ENCODE measurements at regions of chr17 and their contacts with region 1.

Region 1: GRCh38 chr17:62906881-62907280 is 59.2 kb upstream of the TANC2 start:
- DNase-seq: no peak
- H3K4me3 ChIP-seq: no peak overlapping the region
- H3K27ac ChIP-seq: no peak overlapping the region
- H3K4me1 ChIP-seq: no peaks in the 10 kb centered on the region
- H3K27me3 ChIP-seq: no peaks in the 10 kb centered on the region
- CTCF ChIP-seq: no peak
- EP300 ChIP-seq: no peak
- POLR2A ChIP-seq: no peak

Region 2: GRCh38 chr17:62923258-62924150 is 16.6 kb after region 1 on chr17:
- in situ Hi-C with region 1: no loop called
- intact Hi-C with region 1: loop called (anchors 1 kb)
- DNase-seq: no peak
- H3K4me3 ChIP-seq: no peak overlapping the region
- H3K27ac ChIP-seq: no peak overlapping the region
- H3K4me1 ChIP-seq: no peaks in the 10 kb centered on the region
- H3K27me3 ChIP-seq: no peaks in the 10 kb centered on the region
- CTCF ChIP-seq: no peak
- EP300 ChIP-seq: no peak
- POLR2A ChIP-seq: no peak

Region 3: DNA sequence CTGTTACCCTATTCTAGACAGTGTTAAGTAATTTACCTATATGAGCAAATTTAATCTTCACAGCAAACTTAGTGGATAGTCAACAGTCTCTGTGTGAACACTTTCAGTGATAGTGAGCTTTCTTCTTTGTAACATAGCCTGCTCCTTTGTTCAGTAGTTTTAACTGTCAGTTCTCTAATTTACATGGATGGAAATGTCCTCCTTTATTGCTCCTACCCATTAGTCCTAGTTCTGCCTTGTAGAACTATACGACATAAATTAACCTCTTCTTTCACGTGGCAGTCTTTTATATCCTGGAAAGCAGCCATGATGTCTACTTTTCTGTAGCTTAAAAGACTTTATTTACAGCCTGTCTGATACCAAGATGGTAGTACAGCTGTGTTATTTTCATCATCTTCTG is 202.8 kb after region 1 on chr17:
- in situ Hi-C with region 1: no loop called
- intact Hi-C with region 1: no loop called
- DNase-seq: no peak
- H3K4me3 ChIP-seq: no peak overlapping the region
- H3K27ac ChIP-seq: no peak overlapping the region
- H3K4me1 ChIP-seq: no peaks in the 10 kb centered on the region
- H3K27me3 ChIP-seq: no peaks in the 10 kb centered on the region
- CTCF ChIP-seq: no peak
- EP300 ChIP-seq: no peak
- POLR2A ChIP-seq: no peak

Region 4: DNA sequence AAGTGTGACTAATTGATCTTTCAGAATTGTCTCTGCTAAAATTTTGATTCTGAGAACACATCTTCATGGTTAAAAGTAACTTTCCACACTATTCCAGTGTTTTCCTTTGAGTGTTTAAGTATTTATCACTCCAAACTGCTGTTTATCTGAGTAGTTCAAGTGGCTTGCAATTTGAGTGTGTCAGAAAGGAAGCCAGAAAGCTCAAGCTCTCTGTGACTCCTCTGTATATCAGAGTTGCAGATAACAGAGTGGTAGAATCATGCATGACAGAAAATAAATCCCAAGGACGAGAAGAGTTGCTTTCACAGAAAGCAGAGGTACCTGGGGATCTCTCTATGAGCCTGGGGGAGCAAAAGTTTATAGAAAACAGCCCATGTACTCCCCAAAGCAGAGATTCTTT is 409.2 kb after region 1 on chr17:
- in situ Hi-C with region 1: no loop called
- intact Hi-C with region 1: no loop called
- DNase-seq: no peak
- H3K4me3 ChIP-seq: no peak overlapping the region
- H3K27ac ChIP-seq: no peak overlapping the region
- H3K4me1 ChIP-seq: no peaks in the 10 kb centered on the region
- H3K27me3 ChIP-seq: no peaks in the 10 kb centered on the region
- CTCF ChIP-seq: no peak
- EP300 ChIP-seq: no peak
- POLR2A ChIP-seq: no peak

Measured in transverse colon (tissue), 4 donors.